ENCODE measurements at regions of chr2 and their contacts with region 1.

Region 1: DNA sequence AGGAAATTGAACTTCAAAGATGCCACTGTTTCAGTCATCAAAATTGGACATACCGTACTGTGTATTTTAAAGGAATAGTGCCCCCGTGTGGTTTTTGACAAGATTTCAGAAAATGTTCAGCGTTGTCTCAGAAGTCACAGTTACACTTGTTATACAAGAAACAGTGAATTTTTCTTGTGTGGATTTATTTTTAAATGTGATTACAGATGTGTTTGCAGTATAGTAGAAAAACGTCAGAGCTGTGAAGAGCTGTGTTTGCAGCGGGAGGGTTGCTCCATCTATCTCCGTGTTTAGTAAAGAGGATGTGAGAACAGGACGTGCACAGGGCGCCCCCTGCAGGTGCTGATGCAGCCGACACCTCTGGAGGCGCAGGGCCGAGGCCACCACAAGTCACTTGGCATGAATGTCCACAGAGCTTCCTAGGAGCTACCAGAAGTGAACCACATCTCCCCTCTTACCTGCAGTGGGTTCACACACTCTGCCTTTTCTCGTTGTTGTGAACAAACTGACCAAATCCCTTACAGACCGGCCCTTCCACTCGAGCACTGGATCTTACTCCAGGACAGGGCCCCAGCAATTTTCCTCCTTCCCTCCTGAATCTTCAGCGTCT is 73.1 kb downstream of the CACNB4 start:
- DNase-seq: peak; percentile 60
- H3K4me3 ChIP-seq: peak overlapping the region in 2 of 3 experiments; percentile 18 to 28
- H3K27ac ChIP-seq: no peak overlapping the region
- H3K4me1 ChIP-seq: peaks cover 15% of the 10 kb centered on the region
- H3K27me3 ChIP-seq: no peaks in the 10 kb centered on the region
- CTCF ChIP-seq: peak; percentile 81 to 95

Region 2: DNA sequence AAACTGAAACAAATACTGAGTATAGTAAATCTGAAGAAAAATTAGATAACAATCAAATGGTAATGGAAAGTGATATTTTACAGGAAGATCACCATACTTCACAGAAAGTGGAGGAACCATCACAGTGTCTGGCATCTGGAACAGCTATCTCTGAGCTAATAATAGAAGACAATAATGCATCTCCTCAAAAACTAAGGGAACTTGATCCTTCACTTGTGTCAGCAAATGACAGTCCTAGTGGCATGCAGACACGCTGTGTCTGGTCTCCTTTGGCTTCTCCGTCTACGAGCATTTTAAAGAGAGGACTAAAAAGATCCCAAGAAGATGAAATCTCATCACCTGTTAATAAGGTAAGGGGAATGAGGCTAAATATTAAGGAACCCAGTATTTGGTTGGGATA is 560.0 kb before region 1 on chr2:
- CTCF ChIA-PET with region 1: no interaction called
- dilution Hi-C with region 1: no loop called
- in situ Hi-C with region 1: no loop called
- intact Hi-C with region 1: loop called (anchors 10 kb)
- DNase-seq: no peak
- H3K4me3 ChIP-seq: no peak overlapping the region
- H3K27ac ChIP-seq: no peak overlapping the region
- H3K4me1 ChIP-seq: no peaks in the 10 kb centered on the region
- H3K27me3 ChIP-seq: no peaks in the 10 kb centered on the region
- CTCF ChIP-seq: no peak

Region 3: GRCh38 chr2:151638191-151638933 is 387.4 kb before region 1 on chr2:
- CTCF ChIA-PET with region 1: interaction called, 3 read pairs
- dilution Hi-C with region 1: no loop called
- in situ Hi-C with region 1: loop called in 1 of 2 experiments (anchors 25 kb)
- intact Hi-C with region 1: loop called (anchors 10 kb)
- DNase-seq: no peak
- H3K4me3 ChIP-seq: no peak overlapping the region
- H3K27ac ChIP-seq: no peak overlapping the region
- H3K4me1 ChIP-seq: no peaks in the 10 kb centered on the region
- H3K27me3 ChIP-seq: no peaks in the 10 kb centered on the region
- CTCF ChIP-seq: no peak

Region 4: GRCh38 chr2:151937966-151938365 is 87.8 kb before region 1 on chr2:
- CTCF ChIA-PET with region 1: no interaction called
- dilution Hi-C with region 1: no loop called
- in situ Hi-C with region 1: no loop called
- intact Hi-C with region 1: no loop called
- DNase-seq: no peak
- H3K4me3 ChIP-seq: no peak overlapping the region
- H3K27ac ChIP-seq: no peak overlapping the region
- H3K4me1 ChIP-seq: no peaks in the 10 kb centered on the region
- H3K27me3 ChIP-seq: no peaks in the 10 kb centered on the region
- CTCF ChIP-seq: no peak

Region 5: DNA sequence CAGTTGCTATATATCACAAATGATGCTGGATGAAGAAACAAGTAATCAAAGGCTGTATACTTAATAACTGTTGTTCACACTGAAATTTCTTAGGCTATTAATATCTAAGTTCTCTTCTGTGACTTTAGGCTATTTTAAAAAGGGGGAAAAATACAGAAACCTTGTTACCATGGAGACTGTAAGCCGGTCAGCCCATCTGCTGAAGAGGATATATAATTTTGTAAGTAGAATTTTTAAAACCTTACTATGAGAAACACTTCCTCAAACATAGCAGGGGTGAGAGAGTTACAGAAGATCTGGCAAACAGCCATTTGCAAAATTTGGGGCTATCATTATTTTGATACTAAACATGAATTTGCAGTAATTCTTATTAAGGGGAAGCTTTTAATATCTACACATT is 45.3 kb after region 1 on chr2:
- CTCF ChIA-PET with region 1: interaction called, 5 read pairs
- dilution Hi-C with region 1: loop called (anchors 5 kb)
- in situ Hi-C with region 1: no loop called
- intact Hi-C with region 1: no loop called
- DNase-seq: no peak
- H3K4me3 ChIP-seq: no peak overlapping the region
- H3K27ac ChIP-seq: no peak overlapping the region
- H3K4me1 ChIP-seq: no peaks in the 10 kb centered on the region
- H3K27me3 ChIP-seq: no peaks in the 10 kb centered on the region
- CTCF ChIP-seq: no peak

Region 6: GRCh38 chr2:152635635-152636298 is 610.0 kb after region 1 on chr2:
- CTCF ChIA-PET with region 1: no interaction called
- dilution Hi-C with region 1: no loop called
- in situ Hi-C with region 1: loop called (anchors 25 kb)
- intact Hi-C with region 1: no loop called
- DNase-seq: peak; percentile 42
- H3K4me3 ChIP-seq: no peak overlapping the region
- H3K27ac ChIP-seq: no peak overlapping the region
- H3K4me1 ChIP-seq: no peaks in the 10 kb centered on the region
- H3K27me3 ChIP-seq: no peaks in the 10 kb centered on the region
- CTCF ChIP-seq: peak; percentile 70 to 78